ENCODE measurements at regions of chr5 and their contacts with region 1.

Region 1: DNA sequence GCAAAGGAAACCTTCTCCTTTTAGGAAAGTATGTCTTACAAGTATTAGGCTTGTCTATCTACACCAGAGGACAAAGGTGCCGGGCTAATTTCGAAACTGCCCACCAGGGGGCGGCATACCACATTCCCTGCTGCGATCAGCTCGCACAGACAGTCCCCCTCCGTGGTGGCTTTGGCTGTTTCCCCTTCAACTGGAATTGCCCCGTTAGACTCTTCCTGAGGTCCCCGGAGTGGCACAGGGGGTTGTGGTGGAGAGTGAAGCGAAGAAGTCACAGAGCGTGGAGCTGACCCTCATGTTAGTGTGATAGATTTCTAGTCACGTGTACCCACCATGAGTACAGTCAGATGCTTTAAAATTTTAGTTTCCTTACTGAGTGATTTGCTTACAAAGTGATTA is 17.5 kb downstream of the PTTG1 start:
- DNase-seq: peak; percentile 90
- ATAC-seq: peak; percentile 88
- H3K4me3 Mint-ChIP-seq: peak overlapping the region; percentile 74
- H3K27ac Mint-ChIP-seq: peak overlapping the region; percentile 85
- H3K4me1 Mint-ChIP-seq: peaks cover 41% of the 10 kb centered on the region
- H3K27me3 Mint-ChIP-seq: peaks cover 15% of the 10 kb centered on the region

Region 2: DNA sequence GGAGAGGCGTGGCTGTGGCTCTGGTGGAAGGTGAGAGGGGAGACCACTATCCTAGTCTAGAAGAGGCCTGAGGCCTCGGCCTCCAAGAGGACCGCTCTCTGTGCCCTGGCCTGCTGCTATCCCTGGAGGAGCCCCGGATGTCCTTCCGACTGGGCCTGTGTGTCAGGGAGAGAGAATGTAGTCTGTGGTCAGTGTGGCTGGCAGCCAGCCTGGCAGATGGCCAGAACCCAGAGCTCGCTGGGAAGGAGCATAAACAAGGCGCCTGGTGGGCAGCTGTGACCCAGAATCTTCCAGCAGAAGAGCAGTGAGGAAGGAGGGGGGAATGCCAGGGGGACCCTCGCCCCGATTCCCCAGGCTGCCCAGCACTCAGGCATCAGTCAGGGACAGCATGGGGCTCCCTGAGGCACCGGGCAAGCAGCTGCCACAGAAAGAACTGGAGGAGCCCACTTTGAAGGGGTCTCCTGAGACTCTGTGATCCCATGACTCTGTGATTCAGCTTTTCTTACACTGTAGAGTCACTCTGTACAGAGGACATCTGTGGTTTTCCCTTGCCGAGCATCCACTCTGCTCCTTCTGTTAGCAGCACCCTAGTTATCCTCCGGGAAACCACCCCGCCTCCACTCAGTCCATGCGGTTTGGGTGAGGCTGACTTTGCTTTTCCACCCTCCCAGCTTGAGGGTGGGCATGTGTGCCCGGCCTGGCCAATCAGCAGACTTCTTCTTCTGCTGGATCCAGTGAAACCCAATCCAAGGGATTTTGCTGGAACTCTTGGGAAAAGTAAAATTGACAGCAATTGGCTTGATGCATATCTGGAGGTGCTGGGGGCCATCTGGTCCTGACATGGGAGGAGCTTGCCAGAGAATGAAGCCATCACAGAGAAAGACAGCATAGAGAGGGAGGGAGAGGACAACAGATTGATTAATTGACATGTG is 273.8 kb before region 1 on chr5:
- CTCF ChIA-PET with region 1: no interaction called
- POLR2A ChIA-PET with region 1: no interaction called
- DNase-seq: no peak
- ATAC-seq: peak; percentile 42
- H3K4me3 Mint-ChIP-seq: no peak overlapping the region
- H3K27ac Mint-ChIP-seq: no peak overlapping the region
- H3K4me1 Mint-ChIP-seq: peaks cover 10% of the 10 kb centered on the region
- H3K27me3 Mint-ChIP-seq: peaks cover 13% of the 10 kb centered on the region

Region 3: DNA sequence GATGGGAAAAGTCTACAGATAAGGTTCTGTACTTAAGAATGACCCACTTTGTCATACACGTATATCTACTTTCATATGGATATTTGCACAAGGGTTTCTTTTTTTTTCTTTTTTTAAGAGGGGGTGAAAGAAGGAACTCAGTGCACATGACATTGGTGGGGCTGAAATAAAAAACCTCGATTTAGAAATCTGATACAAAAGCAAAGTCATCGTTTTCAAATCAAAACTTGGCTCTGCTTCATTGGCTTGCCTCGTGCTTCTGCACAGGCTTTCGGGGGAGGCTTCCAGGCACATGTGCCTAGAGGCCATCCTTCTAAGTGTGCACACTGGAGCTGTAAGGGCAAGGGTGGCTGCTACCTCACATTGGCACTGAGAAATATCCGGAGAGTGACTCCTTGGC is 13.6 kb after region 1 on chr5:
- CTCF ChIA-PET with region 1: interaction called, 122 read pairs
- POLR2A ChIA-PET with region 1: no interaction called
- DNase-seq: no peak
- ATAC-seq: no peak
- H3K4me3 Mint-ChIP-seq: no peak overlapping the region
- H3K27ac Mint-ChIP-seq: no peak overlapping the region
- H3K4me1 Mint-ChIP-seq: peaks cover 7% of the 10 kb centered on the region
- H3K27me3 Mint-ChIP-seq: peaks cover 11% of the 10 kb centered on the region

Region 4: GRCh38 chr5:160467555-160468362 is 28.6 kb after region 1 on chr5:
- CTCF ChIA-PET with region 1: interaction called, 295 read pairs
- POLR2A ChIA-PET with region 1: interaction called, 34 read pairs
- DNase-seq: peak; percentile 87
- ATAC-seq: peak; percentile 92
- H3K4me3 Mint-ChIP-seq: peak overlapping the region; percentile 86
- H3K27ac Mint-ChIP-seq: peak overlapping the region; percentile 90
- H3K4me1 Mint-ChIP-seq: peaks cover 80% of the 10 kb centered on the region
- H3K27me3 Mint-ChIP-seq: peaks cover 2% of the 10 kb centered on the region

Region 5: DNA sequence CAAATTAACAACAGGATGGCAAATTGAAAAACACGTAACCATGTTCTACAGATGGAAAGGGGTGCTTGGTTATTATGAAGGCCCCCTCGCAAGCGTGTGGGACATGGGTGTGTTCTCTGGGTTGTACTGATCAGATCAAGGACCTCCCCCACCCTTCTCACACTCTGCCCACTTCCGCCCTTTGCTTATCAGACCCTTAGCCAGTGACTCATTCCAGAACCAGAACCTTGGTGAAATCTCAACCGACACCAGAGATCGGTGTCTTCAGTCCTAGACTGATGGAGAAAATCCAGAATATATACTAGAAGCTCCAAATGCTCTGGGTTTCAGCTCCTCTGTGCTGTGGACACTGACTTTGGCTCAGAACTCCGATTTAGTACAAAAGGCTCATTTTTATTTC is 47.4 kb after region 1 on chr5:
- CTCF ChIA-PET with region 1: interaction called, 50 read pairs
- POLR2A ChIA-PET with region 1: interaction called, 3 read pairs
- DNase-seq: peak; percentile 59
- ATAC-seq: peak; percentile 86
- H3K4me3 Mint-ChIP-seq: no peak overlapping the region
- H3K27ac Mint-ChIP-seq: peak overlapping the region; percentile 48
- H3K4me1 Mint-ChIP-seq: peaks cover 24% of the 10 kb centered on the region
- H3K27me3 Mint-ChIP-seq: no peaks in the 10 kb centered on the region

Region 6: DNA sequence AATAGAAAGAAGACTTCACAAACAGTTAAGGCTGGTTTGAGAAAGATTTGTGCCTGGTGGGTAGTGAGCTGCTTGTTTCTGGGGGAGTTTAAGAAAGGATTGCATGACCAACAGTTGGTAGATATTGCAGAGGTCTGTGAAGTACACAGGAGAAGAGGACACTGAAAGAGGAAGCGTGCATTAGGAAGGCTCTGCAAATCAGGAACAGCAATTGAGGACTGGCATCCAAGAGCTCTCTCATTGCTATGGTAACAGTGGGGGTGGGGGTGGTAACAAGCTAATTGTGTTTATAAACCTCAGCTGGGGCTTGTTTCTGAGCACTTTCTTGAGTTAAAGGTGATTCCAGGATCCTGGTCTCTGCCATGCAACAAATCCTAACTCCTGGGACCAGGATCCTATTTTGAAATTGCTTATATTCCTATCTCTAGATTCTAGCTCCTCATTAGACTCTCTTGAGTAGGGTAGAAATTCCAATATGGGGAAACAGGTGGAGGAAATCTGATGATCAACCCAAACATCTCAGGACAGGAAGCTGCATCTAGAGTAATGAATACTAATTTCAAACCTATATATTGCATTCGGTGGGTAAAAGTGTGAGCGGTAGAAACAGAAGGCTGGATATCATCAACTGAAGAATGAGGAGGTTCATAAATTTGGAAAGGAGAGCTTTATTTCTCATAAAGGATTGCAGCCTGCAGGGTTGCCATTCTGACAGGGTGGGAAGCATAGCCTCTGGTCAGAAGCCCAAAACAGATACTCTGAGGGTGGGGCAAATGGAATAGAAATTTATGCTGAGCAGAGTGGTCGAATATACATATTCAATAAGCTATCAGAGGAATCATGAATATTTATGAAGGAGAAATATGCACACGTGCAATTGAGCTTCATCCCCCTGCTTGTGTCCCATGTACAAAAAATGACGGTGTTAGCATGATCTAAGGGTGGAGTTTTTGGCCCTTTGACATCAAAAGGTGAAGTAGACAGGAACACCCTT is 61.9 kb after region 1 on chr5:
- CTCF ChIA-PET with region 1: interaction called, 177 read pairs
- POLR2A ChIA-PET with region 1: interaction called, 11 read pairs
- DNase-seq: no peak
- ATAC-seq: no peak
- H3K4me3 Mint-ChIP-seq: no peak overlapping the region
- H3K27ac Mint-ChIP-seq: no peak overlapping the region
- H3K4me1 Mint-ChIP-seq: peaks cover 6% of the 10 kb centered on the region
- H3K27me3 Mint-ChIP-seq: peaks cover 13% of the 10 kb centered on the region

Measured in activated CD8-positive, alpha-beta T cell treated with anti-CD3 and anti-CD28 coated beads, Interleukin-2, amount 10 ng/mL, durations not matched to agents 7 days and 5 days (primary cell).